ENCODE measurements at regions of chr5 and their contacts with region 1.

Region 1: DNA sequence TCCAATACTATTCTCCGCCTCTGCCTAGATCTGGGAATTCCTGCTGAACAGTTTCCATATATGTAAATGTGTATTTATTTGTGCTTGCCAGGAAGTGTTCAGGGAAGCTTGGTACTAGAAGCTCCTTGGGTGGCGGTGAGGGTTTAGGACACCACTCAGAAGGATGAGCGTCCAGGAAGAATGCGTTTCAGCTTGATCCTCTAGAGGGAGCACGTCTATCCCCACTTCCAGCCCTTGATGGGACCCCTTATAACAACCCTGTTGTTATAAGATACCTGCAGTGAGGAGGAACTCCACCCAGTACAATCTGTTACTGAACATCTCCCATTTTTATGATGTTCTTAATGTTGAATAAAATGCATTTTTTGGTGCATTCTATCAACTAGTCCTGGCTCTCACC is 88.9 kb downstream of the CYFIP2 start:
- DNase-seq: no peak
- ATAC-seq: no peak
- H3K4me3 ChIP-seq: no peak overlapping the region
- H3K4me3 Mint-ChIP-seq: no peak overlapping the region
- H3K27ac ChIP-seq: no peak overlapping the region
- H3K27ac Mint-ChIP-seq: peak overlapping the region; percentile 40
- H3K4me1 ChIP-seq: no peaks in the 10 kb centered on the region
- H3K4me1 Mint-ChIP-seq: peaks cover 26% of the 10 kb centered on the region
- H3K27me3 ChIP-seq: no peaks in the 10 kb centered on the region
- H3K27me3 Mint-ChIP-seq: no peaks in the 10 kb centered on the region
- CTCF ChIP-seq: no peak

Region 2: DNA sequence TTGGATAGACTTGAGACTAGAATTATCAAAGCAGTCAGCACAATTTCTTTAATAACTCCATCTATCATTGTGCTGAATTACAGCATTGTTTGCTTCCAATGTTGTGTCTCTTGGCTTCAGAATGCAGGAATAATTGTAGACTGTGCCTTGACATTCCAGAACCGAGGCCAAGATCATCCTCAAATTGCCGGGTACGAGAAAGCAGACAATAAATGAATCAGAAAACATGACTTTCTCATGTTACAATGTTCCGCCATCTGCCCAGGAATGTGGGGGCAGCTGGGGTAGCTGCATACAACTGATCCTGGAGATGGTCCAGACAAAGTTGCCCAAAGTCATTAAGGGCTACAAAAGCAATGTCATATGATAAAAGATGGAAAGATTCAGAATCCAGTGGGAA is 1234.0 kb before region 1 on chr5:
- CTCF ChIA-PET with region 1: no interaction called
- POLR2A ChIA-PET with region 1: no interaction called
- intact Hi-C with region 1: no loop called
- DNase-seq: no peak
- ATAC-seq: no peak
- H3K4me3 ChIP-seq: no peak overlapping the region
- H3K4me3 Mint-ChIP-seq: no peak overlapping the region
- H3K27ac ChIP-seq: no peak overlapping the region
- H3K27ac Mint-ChIP-seq: no peak overlapping the region
- H3K4me1 ChIP-seq: no peaks in the 10 kb centered on the region
- H3K4me1 Mint-ChIP-seq: no peaks in the 10 kb centered on the region
- H3K27me3 ChIP-seq: peaks cover 0 to 7% of the 10 kb centered on the region in 2 experiments
- H3K27me3 Mint-ChIP-seq: peaks cover 42% of the 10 kb centered on the region
- CTCF ChIP-seq: no peak

Region 3: GRCh38 chr5:157303667-157304327 is 51.0 kb before region 1 on chr5:
- CTCF ChIA-PET with region 1: no interaction called
- POLR2A ChIA-PET with region 1: no interaction called
- intact Hi-C with region 1: no loop called
- DNase-seq: peak; percentile 45 to 86 (median 56)
- ATAC-seq: peak; percentile 72
- H3K4me3 ChIP-seq: peak overlapping the region; percentile 42
- H3K4me3 Mint-ChIP-seq: peak overlapping the region; percentile 87
- H3K27ac ChIP-seq: peak overlapping the region; percentile 54 to 65
- H3K27ac Mint-ChIP-seq: peak overlapping the region; percentile 80
- H3K4me1 ChIP-seq: peaks cover 57% of the 10 kb centered on the region
- H3K4me1 Mint-ChIP-seq: peaks cover 70% of the 10 kb centered on the region
- H3K27me3 ChIP-seq: no peaks in the 10 kb centered on the region
- H3K27me3 Mint-ChIP-seq: no peaks in the 10 kb centered on the region
- CTCF ChIP-seq: peak; percentile 26

Region 4: DNA sequence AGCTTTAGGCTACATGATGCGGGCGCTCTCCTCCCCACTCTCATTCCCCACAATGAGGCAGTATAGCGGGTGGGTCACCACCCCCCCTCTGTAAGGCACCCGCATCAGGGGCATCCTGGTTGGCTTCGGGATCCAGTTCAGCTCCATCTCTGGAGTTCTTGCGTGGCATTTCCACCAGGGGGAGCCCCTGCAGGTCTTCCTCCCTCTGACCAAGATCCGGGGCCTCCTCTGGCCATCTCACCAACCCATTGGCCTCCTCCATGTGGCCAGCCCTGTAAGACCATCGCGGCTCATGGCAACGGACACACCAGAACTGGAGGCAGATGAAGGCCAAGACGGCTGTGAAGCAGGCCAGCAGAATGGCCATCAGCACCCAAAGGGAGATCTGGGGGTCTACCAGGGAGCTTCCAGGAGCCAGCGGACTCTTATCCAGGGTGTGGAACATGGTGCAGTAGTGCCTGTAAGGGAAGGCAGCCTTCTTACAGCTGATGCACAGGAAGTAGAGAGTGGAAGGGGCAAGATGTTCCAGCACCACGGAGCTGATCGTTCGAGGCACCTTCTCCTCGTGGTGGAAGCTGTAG is 11.9 kb before region 1 on chr5:
- CTCF ChIA-PET with region 1: interaction called, 10 read pairs
- POLR2A ChIA-PET with region 1: no interaction called
- intact Hi-C with region 1: no loop called
- DNase-seq: peak in 8 of 14 experiments; percentile 7 to 53 (median 22)
- ATAC-seq: no peak
- H3K4me3 ChIP-seq: no peak overlapping the region
- H3K4me3 Mint-ChIP-seq: no peak overlapping the region
- H3K27ac ChIP-seq: no peak overlapping the region
- H3K27ac Mint-ChIP-seq: no peak overlapping the region
- H3K4me1 ChIP-seq: peaks cover 16% of the 10 kb centered on the region
- H3K4me1 Mint-ChIP-seq: peaks cover 23% of the 10 kb centered on the region
- H3K27me3 ChIP-seq: no peaks in the 10 kb centered on the region
- H3K27me3 Mint-ChIP-seq: no peaks in the 10 kb centered on the region
- CTCF ChIP-seq: peak; percentile 63

Measured in CD4-positive, alpha-beta T cell (primary cell).